Body of pancreas (tissue), 4 donors: ENCODE measurements at regions of chr6 and their contacts with region 1.

Region 1: GRCh38 chr6:7579851-7580250 is 10.1 kb upstream of the SNRNP48 start:
- DNase-seq: no peak
- ATAC-seq: no peak
- H3K4me3 ChIP-seq: no peak overlapping the region
- H3K27ac ChIP-seq: no peak overlapping the region
- H3K4me1 ChIP-seq: no peaks in the 10 kb centered on the region
- H3K27me3 ChIP-seq: no peaks in the 10 kb centered on the region
- CTCF ChIP-seq: no peak
- POLR2A ChIP-seq: no peak

Region 2: GRCh38 chr6:7300926-7301325 is 278.9 kb before region 1 on chr6:
- intact Hi-C with region 1: loop called (anchors 10 kb)
- DNase-seq: no peak
- ATAC-seq: no peak
- H3K4me3 ChIP-seq: no peak overlapping the region
- H3K27ac ChIP-seq: peak overlapping the region in 1 of 4 donors; percentile 50
- H3K4me1 ChIP-seq: peaks cover 27% of the 10 kb centered on the region
- H3K27me3 ChIP-seq: no peaks in the 10 kb centered on the region
- CTCF ChIP-seq: no peak
- POLR2A ChIP-seq: no peak

Region 3: DNA sequence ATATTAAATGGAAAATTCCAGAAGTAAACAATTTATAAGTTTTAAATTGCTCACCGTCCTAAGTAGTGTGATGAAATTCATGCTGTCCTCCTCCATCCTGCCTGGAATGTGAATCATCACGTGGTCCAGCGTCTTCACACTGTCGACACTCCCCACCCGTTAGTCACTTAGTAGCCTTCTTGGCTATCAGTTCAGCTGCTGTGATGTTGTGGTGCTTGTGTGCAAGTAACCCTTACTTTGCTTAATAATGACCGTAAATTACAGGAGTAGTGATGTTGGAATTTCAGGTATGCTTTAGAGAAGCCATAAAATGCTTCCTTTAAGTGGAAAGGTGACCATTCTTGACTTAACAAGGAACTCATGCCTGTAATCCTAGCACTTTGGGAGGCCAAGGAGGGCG is 165.0 kb before region 1 on chr6:
- intact Hi-C with region 1: loop called (anchors 10 kb)
- DNase-seq: no peak
- ATAC-seq: no peak
- H3K4me3 ChIP-seq: no peak overlapping the region
- H3K27ac ChIP-seq: no peak overlapping the region
- H3K4me1 ChIP-seq: peaks cover 6% of the 10 kb centered on the region
- H3K27me3 ChIP-seq: no peaks in the 10 kb centered on the region
- CTCF ChIP-seq: no peak
- POLR2A ChIP-seq: no peak